ENCODE measurements at regions of chr3 and their contacts with region 1.

Region 1: GRCh38 chr3:94433811-94434210 is 370.9 kb downstream of the NSUN3 start:
- DNase-seq: peak; percentile 37
- ATAC-seq: no peak
- H3K4me3 ChIP-seq: no peak overlapping the region
- H3K27ac ChIP-seq: no peak overlapping the region
- H3K4me1 ChIP-seq: 0 out of 2 replicates have a peak, but pooled peaks cover 4% of the 10 kb centered on the region
- H3K27me3 ChIP-seq: no peaks in the 10 kb centered on the region
- CTCF ChIP-seq: no peak
- POLR2A ChIP-seq: no peak
- RAD21 ChIP-seq: no peak

Region 2: DNA sequence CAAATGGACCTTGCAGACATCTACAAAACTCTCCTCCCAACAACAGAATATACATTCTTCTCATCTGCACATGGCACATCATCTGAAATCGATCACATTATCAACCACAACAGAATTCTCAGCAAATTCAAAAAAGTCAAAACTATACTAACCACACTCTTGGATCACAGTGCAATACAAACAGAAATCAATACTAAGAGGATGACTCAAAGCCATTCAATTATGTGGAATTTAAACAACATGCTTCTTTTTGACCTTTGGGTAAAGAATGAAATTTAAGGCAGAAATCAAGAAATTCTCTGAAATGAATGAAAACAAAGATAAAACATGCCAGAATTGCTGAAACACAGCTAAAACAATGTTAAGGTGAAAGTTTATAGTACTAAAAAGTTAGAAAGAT is 12.9 kb before region 1 on chr3:
- CTCF ChIA-PET with region 1: no interaction called
- POLR2A ChIA-PET with region 1: interaction called, 3 read pairs
- dilution Hi-C with region 1: no loop called
- in situ Hi-C with region 1: no loop called
- intact Hi-C with region 1: loop called (anchors 2 kb)
- DNase-seq: peak; percentile 55
- ATAC-seq: peak; percentile 35
- H3K4me3 ChIP-seq: no peak overlapping the region
- H3K27ac ChIP-seq: no peak overlapping the region
- H3K4me1 ChIP-seq: no peaks in the 10 kb centered on the region; the same call in 1 of the 2 replicates
- H3K27me3 ChIP-seq: no peaks in the 10 kb centered on the region
- CTCF ChIP-seq: no peak
- POLR2A ChIP-seq: no peak
- RAD21 ChIP-seq: no peak

Region 3: GRCh38 chr3:94904156-94904674 is 470.4 kb after region 1 on chr3:
- CTCF ChIA-PET with region 1: no interaction called
- POLR2A ChIA-PET with region 1: interaction called, 11 read pairs
- dilution Hi-C with region 1: no loop called
- in situ Hi-C with region 1: no loop called
- intact Hi-C with region 1: no loop called
- DNase-seq: no peak
- ATAC-seq: no peak
- H3K4me3 ChIP-seq: no peak overlapping the region
- H3K27ac ChIP-seq: no peak overlapping the region
- H3K4me1 ChIP-seq: no peaks in the 10 kb centered on the region
- H3K27me3 ChIP-seq: no peaks in the 10 kb centered on the region
- CTCF ChIP-seq: no peak
- POLR2A ChIP-seq: no peak
- RAD21 ChIP-seq: no peak